Psoas muscle (tissue), 8 donors: ENCODE measurements at regions of chr11 and their contacts with region 1.

Region 1: GRCh38 chr11:76670485-76671236 is at the start of gene LRRC32:
- DNase-seq: peak; percentile 74 to 77
- ATAC-seq: peak; percentile 42 to 63 (median 52)
- H3K4me3 ChIP-seq: peak within 1 kb of the TSS; percentile 66
- H3K27ac ChIP-seq: peak within 1 kb of the TSS; percentile 80
- H3K4me1 ChIP-seq: no peaks in the 10 kb centered on the region
- H3K27me3 ChIP-seq: peaks cover 0 to 19% (median 4%) of the 10 kb centered on the region in 3 donors
- CTCF ChIP-seq: no peak
- total RNA-seq, gene LRRC32: 14.7 to 32.9 (median 21.4) TPM

Region 2: GRCh38 chr11:76579056-76579751 is 91.5 kb before region 1 on chr11:
- intact Hi-C with region 1: loop called in 1 of 2 experiments (anchors 2 kb)
- DNase-seq: peak; percentile 51 to 70
- ATAC-seq: peak in 3 of 4 donors; percentile 60 to 72 (median 67)
- H3K4me3 ChIP-seq: no peak overlapping the region
- H3K27ac ChIP-seq: peak overlapping the region; percentile 75
- H3K4me1 ChIP-seq: no peaks in the 10 kb centered on the region
- H3K27me3 ChIP-seq: no peaks in the 10 kb centered on the region
- CTCF ChIP-seq: peak; percentile 11

Region 3: GRCh38 chr11:76598426-76598839 is 72.2 kb before region 1 on chr11:
- intact Hi-C with region 1: loop called in 1 of 2 experiments (anchors 5 kb)
- DNase-seq: no peak
- ATAC-seq: peak; percentile 57 to 74 (median 71)
- H3K4me3 ChIP-seq: no peak overlapping the region
- H3K27ac ChIP-seq: no peak overlapping the region
- H3K4me1 ChIP-seq: no peaks in the 10 kb centered on the region
- H3K27me3 ChIP-seq: no peaks in the 10 kb centered on the region
- CTCF ChIP-seq: peak; percentile 37

Region 4: GRCh38 chr11:76610871-76611475 is 59.7 kb before region 1 on chr11:
- intact Hi-C with region 1: loop called in 1 of 2 experiments (anchors 5 kb)
- DNase-seq: no peak
- ATAC-seq: peak; percentile 26 to 56 (median 53)
- H3K4me3 ChIP-seq: no peak overlapping the region
- H3K27ac ChIP-seq: no peak overlapping the region
- H3K4me1 ChIP-seq: no peaks in the 10 kb centered on the region
- H3K27me3 ChIP-seq: no peaks in the 10 kb centered on the region
- CTCF ChIP-seq: no peak